ENCODE measurements at regions of chr15 and their contacts with region 1.

Region 1: DNA sequence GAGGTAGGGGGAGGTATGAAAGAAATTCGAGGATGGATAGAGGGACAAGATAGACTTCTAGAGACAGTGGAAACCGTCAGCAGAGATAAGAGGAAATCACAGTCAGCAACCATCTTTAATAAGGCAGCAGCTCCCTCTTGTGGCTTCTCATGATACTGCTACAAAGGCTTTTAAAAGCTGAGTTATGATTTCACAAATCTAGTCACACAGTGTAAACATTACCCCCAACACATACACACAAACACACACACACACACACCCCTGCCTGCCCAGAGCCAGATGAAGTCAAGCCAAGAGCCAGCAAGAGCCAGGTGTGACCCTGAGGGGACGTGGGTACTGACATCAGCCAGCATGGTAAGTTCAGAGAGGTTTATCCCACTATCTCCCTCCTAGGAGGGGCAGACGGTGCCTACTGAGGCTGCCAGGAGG is 18.9 kb upstream of the TGM5 start:
- DNase-seq: no peak
- H3K4me3 ChIP-seq: no peak overlapping the region
- H3K27ac ChIP-seq: no peak overlapping the region
- H3K4me1 ChIP-seq: peaks cover 0 to 7% (median 0%) of the 10 kb centered on the region in 3 donors
- H3K27me3 ChIP-seq: peaks cover 0 to 29% (median 0%) of the 10 kb centered on the region in 4 donors
- CTCF ChIP-seq: peak; percentile 75 to 91 (median 84)
- POLR2A ChIP-seq: no peak

Region 2: DNA sequence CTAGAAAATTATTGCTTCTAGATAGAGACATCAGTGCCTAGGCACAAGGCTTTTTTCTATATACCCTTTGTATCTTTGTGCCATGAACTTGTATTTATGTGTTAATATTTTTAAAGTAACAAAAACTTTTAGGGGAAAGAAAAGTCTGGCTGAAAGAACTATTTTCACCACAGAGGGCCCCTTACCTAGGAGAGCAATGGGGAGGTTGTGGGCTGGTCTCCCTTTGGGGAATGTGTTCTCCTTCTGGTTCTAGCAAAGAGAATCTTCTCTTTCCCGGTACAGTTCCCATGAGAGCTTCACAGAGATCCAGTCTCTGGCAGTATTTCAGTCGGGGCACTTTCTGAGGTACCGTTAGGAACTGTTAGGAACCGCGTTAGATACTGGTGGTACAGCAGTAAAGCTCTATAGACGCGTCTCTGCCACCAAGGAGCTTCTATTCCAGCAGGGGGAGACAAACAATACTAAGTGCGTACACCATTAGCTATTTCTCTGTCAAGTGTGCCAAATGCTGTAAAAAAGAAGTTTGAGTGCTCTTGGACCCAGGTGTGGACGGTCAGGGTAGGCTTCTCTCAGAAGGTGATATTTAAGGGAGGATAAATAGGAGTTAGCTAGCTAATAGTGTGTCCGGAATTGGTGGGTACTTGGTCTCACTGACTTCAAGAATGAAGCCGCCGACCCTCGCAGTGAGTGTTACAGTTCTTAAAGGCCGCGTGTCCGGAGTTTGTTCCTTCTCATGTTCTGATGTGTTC is 60.2 kb before region 1 on chr15:
- intact Hi-C with region 1: loop called (anchors 5 kb)
- DNase-seq: no peak
- H3K4me3 ChIP-seq: no peak overlapping the region
- H3K27ac ChIP-seq: no peak overlapping the region
- H3K4me1 ChIP-seq: peaks cover 0 to 4% (median 0%) of the 10 kb centered on the region in 3 donors
- H3K27me3 ChIP-seq: peaks cover 0 to 14% (median 0%) of the 10 kb centered on the region in 4 donors
- CTCF ChIP-seq: peak; percentile 22 to 84 (median 70)
- POLR2A ChIP-seq: no peak

Region 3: GRCh38 chr15:43404130-43404529 is 118.5 kb after region 1 on chr15:
- intact Hi-C with region 1: no loop called
- DNase-seq: no peak
- H3K4me3 ChIP-seq: no peak overlapping the region
- H3K27ac ChIP-seq: no peak overlapping the region
- H3K4me1 ChIP-seq: no peaks in the 10 kb centered on the region
- H3K27me3 ChIP-seq: no peaks in the 10 kb centered on the region
- CTCF ChIP-seq: no peak
- POLR2A ChIP-seq: no peak

Measured in esophagus squamous epithelium (tissue), 5 donors.